ENCODE measurements at regions of chr2 and their contacts with region 1.

Region 1: GRCh38 chr2:85302121-85302520 is 25.7 kb downstream of the TGOLN2 start:
- DNase-seq: no peak
- H3K4me3 ChIP-seq: no peak overlapping the region
- H3K27ac ChIP-seq: no peak overlapping the region
- H3K4me1 ChIP-seq: no peaks in the 10 kb centered on the region
- H3K27me3 ChIP-seq: no peaks in the 10 kb centered on the region
- CTCF ChIP-seq: no peak

Region 2: GRCh38 chr2:85066874-85067351 is 235.2 kb before region 1 on chr2:
- intact Hi-C with region 1: loop called (anchors 1 kb)
- DNase-seq: peak; percentile 21 to 85
- H3K4me3 ChIP-seq: peak overlapping the region; percentile 42 to 59
- H3K27ac ChIP-seq: no peak overlapping the region
- H3K4me1 ChIP-seq: peaks cover 0 to 4% of the 10 kb centered on the region in 2 donors
- H3K27me3 ChIP-seq: no peaks in the 10 kb centered on the region
- CTCF ChIP-seq: peak; percentile 56 to 88 (median 80)

Region 3: DNA sequence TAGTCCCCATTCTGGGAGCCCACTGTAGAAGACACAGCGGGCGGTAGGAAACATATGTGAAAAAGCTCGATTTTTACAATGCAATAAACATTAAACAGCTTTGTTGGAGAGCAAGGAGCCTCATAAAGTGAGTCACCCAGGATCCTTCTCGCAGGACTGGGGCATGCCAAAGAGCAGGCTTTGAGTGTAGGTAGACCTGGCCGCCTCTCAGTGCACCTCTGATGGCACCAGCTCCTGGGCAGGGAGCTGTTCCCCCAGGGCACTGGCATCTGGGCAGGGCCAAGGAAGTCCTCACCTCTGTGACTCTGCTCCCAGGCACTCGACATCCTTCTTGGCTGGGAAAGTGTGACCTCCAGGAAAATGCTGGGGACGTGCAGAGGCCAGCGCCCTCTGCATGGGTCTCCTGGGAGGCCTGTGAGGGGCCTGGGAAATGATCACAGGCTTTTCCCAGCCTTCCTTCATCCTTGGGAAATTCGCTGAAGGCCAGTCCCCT is 709.4 kb after region 1 on chr2:
- intact Hi-C with region 1: no loop called
- DNase-seq: peak in 1 of 2 donors; percentile 27
- H3K4me3 ChIP-seq: no peak overlapping the region
- H3K27ac ChIP-seq: no peak overlapping the region
- H3K4me1 ChIP-seq: no peaks in the 10 kb centered on the region
- H3K27me3 ChIP-seq: no peaks in the 10 kb centered on the region
- CTCF ChIP-seq: no peak

Measured in ascending aorta (tissue), 2 donors.